B cell (primary cell): ENCODE measurements at regions of chr19 and their contacts with region 1.

Region 1: DNA sequence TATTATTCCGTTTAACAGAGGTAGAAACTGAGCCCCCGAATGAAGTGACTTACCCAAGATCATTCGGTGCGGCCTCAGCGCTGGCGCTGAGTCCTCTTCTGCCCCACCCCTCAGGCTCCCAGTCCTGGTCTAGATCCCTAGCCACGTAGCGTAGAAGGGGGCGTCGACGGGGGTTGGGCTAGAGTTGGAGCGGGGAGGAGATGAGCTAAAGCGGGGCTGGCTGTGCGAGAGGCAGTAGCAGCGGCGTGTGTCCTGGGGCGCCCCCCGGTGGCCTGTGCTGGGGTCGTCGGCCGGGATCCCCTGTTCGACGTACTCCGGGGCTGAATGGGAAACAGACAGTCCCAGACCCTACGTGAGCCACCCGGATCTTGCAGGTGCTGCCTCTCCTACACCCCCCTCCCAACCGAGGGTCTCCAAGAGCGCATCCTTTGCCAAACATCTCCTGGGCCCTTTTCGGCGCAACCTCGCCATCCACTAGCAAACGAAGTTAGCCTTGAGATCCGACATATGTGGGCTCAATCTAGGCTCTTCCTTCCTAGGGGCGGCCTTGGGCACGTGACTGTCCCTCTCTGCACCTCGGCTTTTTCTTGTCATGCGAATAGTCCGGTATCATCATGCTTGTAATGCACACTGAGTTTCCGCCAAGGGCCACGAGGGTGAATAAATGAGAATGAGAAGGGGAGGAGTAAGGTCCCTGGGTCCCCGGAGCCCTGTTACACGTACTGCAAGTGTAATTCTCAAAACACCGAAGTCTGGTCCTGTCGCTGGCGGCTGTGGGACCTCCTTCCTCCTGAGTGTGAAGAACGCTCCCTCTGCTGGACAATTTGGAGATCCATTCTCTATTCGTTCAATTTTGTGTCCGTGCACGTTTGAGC is 47.7 kb downstream of the CYP4F22 start:
- DNase-seq: peak; percentile 93
- ATAC-seq: peak; percentile 87
- H3K4me3 ChIP-seq: peak overlapping the region; percentile 17 to 89 (median 51)
- H3K4me3 Mint-ChIP-seq: peak overlapping the region; percentile 91
- H3K27ac ChIP-seq: peak overlapping the region; percentile 12 to 51
- H3K27ac Mint-ChIP-seq: peak overlapping the region; percentile 78
- H3K4me1 ChIP-seq: peaks cover 19 to 21% of the 10 kb centered on the region in 2 donors
- H3K4me1 Mint-ChIP-seq: peaks cover 18% of the 10 kb centered on the region
- H3K27me3 ChIP-seq: peaks cover 0 to 33% (median 6%) of the 10 kb centered on the region in 4 experiments
- H3K27me3 Mint-ChIP-seq: peaks cover 9% of the 10 kb centered on the region
- CTCF ChIP-seq: peak; percentile 76

Region 2: DNA sequence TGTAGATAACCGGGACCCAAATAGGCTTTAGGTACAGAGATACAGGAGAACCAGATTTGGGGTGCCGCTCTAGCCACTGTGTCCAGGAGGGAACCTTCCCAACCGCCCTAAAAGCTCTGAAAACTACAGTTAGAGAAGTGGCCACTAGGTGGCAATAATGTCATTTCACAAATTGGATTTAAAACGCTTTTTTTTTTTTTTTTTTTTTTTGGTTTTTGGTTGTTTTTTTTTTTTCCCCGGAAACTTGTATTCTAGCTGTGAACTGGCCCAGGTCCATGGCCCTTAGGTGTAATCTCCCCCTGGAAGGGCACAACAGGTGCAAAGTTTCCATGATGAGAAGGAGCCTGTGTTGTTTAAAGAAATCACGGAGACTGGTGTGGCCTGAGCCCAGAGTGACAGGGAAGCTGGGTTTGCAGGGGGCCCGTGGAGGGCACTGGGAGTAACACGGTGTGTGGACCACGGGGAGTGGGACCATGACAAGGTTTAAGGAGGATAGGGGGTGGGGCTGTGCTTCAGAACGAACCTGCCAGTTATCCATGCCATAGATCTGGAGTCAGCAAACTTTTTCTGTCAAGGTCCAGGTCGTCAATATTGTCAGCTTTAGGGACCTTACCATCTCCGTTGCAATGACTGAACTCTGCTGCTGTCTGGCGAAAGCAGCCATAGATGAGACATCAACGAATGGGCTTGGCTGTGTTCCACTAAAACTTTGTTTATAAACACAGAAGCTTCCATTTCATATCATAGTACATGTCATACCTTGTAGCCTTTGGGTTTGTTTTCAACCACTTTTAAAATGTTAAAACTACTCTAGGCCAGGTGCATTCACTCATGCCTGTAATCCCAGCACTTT is 463.9 kb before region 1 on chr19:
- CTCF ChIA-PET with region 1: interaction called, 13 read pairs
- POLR2A ChIA-PET with region 1: no interaction called
- intact Hi-C with region 1: loop called (anchors 1 kb)
- DNase-seq: peak; percentile 82
- ATAC-seq: peak; percentile 66
- H3K4me3 ChIP-seq: no peak overlapping the region
- H3K4me3 Mint-ChIP-seq: no peak overlapping the region
- H3K27ac ChIP-seq: no peak overlapping the region
- H3K27ac Mint-ChIP-seq: no peak overlapping the region
- H3K4me1 ChIP-seq: peaks cover 4 to 6% of the 10 kb centered on the region in 2 donors
- H3K4me1 Mint-ChIP-seq: peaks cover 2% of the 10 kb centered on the region
- H3K27me3 ChIP-seq: peaks cover 0 to 4% (median 2%) of the 10 kb centered on the region in 4 experiments
- H3K27me3 Mint-ChIP-seq: peaks cover 28% of the 10 kb centered on the region
- CTCF ChIP-seq: peak; percentile 85

Region 3: DNA sequence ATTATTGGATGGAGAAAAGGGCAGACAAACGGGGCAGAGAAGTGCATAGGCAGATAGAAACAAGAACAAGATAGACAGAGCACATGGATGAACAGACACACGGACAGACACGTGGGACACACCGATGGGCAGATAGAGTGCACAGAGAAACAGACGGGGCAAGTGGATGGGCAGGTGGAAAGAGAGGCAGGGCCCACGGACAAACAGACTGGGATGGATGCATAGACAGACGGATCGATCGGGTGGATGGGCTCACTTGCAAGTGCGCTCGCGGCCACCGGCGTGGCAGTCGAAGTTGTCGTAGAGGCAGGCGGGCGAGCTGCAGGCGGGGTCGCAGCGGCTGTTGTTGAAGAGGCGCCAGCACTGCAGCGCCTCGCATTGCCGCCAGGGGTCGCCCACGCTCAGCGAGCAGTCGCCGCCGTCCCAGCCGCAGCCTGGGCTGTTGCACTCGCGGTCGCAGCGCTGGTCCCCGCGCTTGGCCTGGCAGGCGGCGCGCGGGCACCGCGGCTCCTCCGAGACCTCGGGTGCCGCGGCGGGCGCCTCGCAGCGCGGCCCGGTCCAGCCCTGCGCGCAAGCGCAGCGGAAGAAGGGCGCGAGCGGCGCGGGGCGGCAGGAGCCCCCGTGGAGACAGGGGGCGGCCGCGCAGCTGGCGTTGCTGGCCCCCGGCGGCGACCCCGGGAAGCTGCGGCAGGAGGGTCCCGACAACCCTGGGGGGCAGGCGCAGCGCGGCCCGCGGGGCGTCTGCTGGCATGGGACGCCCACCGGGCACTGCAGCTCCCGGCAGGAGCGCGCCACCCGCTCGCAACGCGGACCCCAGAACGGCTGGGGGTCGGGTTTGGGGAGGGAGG is 378.5 kb before region 1 on chr19:
- CTCF ChIA-PET with region 1: interaction called, 30 read pairs
- POLR2A ChIA-PET with region 1: interaction called, 6 read pairs
- intact Hi-C with region 1: no loop called
- DNase-seq: peak; percentile 91
- ATAC-seq: peak; percentile 100
- H3K4me3 ChIP-seq: no peak overlapping the region
- H3K4me3 Mint-ChIP-seq: peak overlapping the region; percentile 59
- H3K27ac ChIP-seq: no peak overlapping the region
- H3K27ac Mint-ChIP-seq: peak overlapping the region; percentile 22
- H3K4me1 ChIP-seq: peaks cover 4 to 6% of the 10 kb centered on the region in 2 donors
- H3K4me1 Mint-ChIP-seq: peaks cover 7% of the 10 kb centered on the region
- H3K27me3 ChIP-seq: peaks cover 0 to 22% (median 4%) of the 10 kb centered on the region in 4 experiments
- H3K27me3 Mint-ChIP-seq: peaks cover 24% of the 10 kb centered on the region
- CTCF ChIP-seq: peak; percentile 90

Region 4: GRCh38 chr19:15379083-15379995 is 176.7 kb before region 1 on chr19 and contains the start of gene AKAP8:
- CTCF ChIA-PET with region 1: interaction called, 9 read pairs
- POLR2A ChIA-PET with region 1: no interaction called
- intact Hi-C with region 1: loop called (anchors 1 kb)
- DNase-seq: peak; percentile 99
- ATAC-seq: peak; percentile 91
- H3K4me3 ChIP-seq: peak within 1 kb of the TSS; percentile 87 to 99 (median 94)
- H3K4me3 Mint-ChIP-seq: peak within 1 kb of the TSS; percentile 97
- H3K27ac ChIP-seq: peak within 1 kb of the TSS; percentile 92 to 97
- H3K27ac Mint-ChIP-seq: peak within 1 kb of the TSS; percentile 100
- H3K4me1 ChIP-seq: peaks cover 26 to 27% of the 10 kb centered on the region in 2 donors
- H3K4me1 Mint-ChIP-seq: peaks cover 39% of the 10 kb centered on the region
- H3K27me3 ChIP-seq: no peaks in the 10 kb centered on the region
- H3K27me3 Mint-ChIP-seq: no peaks in the 10 kb centered on the region
- CTCF ChIP-seq: no peak
- total RNA-seq, gene AKAP8: 80.0 and 84.8 TPM in 2 replicates

Region 5: DNA sequence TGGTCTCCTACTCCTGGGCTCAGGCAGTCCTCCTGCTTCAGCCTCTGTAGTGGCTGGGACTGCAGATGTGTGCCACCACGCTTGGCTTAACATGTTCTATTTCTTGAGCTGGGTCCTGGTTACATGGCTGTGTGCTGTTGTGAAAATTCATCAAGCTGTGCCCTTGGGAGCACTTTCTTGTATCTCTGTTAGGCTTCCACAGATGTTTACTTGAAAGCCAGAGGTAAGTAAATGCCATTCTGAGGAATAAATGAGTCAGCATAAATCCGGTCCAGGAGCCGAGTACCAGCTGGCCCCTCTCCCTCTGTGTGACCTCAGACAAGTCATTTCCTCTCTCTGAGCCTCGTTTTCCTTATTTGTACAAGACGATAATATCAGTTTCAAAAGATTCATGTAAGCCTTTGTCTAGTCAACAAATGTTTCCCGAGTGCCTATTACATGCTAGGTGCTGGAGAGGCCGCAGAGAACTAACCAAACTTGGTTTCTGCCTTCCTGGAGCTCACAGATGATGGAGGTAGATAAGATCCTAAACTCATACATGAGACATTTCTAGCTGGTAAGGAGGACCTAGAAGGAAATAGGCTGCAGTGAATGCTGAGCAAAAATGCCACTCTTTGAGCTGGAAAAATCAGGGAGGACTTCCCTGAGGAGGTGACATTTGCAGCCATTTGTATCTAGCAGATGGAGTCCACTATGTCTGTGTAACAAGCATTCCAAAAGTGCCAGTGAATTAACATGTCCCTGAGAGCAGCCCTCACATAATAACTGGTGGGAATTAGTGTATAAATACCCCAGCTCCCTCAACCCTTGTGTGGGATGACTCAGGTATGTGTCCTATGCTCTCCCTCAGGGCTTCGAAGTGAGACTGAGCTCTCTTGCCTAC is 88.9 kb before region 1 on chr19:
- CTCF ChIA-PET with region 1: interaction called, 7 read pairs
- POLR2A ChIA-PET with region 1: interaction called, 4 read pairs
- intact Hi-C with region 1: loop called (anchors 1 kb)
- DNase-seq: no peak
- ATAC-seq: no peak
- H3K4me3 ChIP-seq: no peak overlapping the region
- H3K4me3 Mint-ChIP-seq: peak overlapping the region; percentile 47
- H3K27ac ChIP-seq: no peak overlapping the region
- H3K27ac Mint-ChIP-seq: peak overlapping the region; percentile 68
- H3K4me1 ChIP-seq: peaks cover 41 to 53% of the 10 kb centered on the region in 2 donors
- H3K4me1 Mint-ChIP-seq: peaks cover 48% of the 10 kb centered on the region
- H3K27me3 ChIP-seq: peaks cover 0 to 24% (median 8%) of the 10 kb centered on the region in 4 experiments
- H3K27me3 Mint-ChIP-seq: peaks cover 19% of the 10 kb centered on the region
- CTCF ChIP-seq: no peak

Region 6: GRCh38 chr19:15587663-15588062 is 31.7 kb after region 1 on chr19:
- CTCF ChIA-PET with region 1: no interaction called
- POLR2A ChIA-PET with region 1: no interaction called
- intact Hi-C with region 1: no loop called
- DNase-seq: no peak
- ATAC-seq: no peak
- H3K4me3 ChIP-seq: no peak overlapping the region
- H3K4me3 Mint-ChIP-seq: no peak overlapping the region
- H3K27ac ChIP-seq: no peak overlapping the region
- H3K27ac Mint-ChIP-seq: no peak overlapping the region
- H3K4me1 ChIP-seq: peaks cover 5 to 9% of the 10 kb centered on the region in 2 donors
- H3K4me1 Mint-ChIP-seq: peaks cover 7% of the 10 kb centered on the region
- H3K27me3 ChIP-seq: peaks cover 0 to 19% (median 8%) of the 10 kb centered on the region in 4 experiments
- H3K27me3 Mint-ChIP-seq: peaks cover 35% of the 10 kb centered on the region
- CTCF ChIP-seq: no peak